Mammary epithelial cell (primary cell): ENCODE measurements at regions of chr2 and their contacts with region 1.

Region 1: GRCh38 chr2:151051574-151052220 is 210.0 kb downstream of the RBM43 start:
- DNase-seq: peak; percentile 60
- H3K4me3 ChIP-seq: no peak overlapping the region
- H3K27ac ChIP-seq: no peak overlapping the region
- H3K4me1 ChIP-seq: peaks cover 29% of the 10 kb centered on the region
- H3K27me3 ChIP-seq: no peaks in the 10 kb centered on the region
- CTCF ChIP-seq: peak; percentile 85 to 86

Region 2: DNA sequence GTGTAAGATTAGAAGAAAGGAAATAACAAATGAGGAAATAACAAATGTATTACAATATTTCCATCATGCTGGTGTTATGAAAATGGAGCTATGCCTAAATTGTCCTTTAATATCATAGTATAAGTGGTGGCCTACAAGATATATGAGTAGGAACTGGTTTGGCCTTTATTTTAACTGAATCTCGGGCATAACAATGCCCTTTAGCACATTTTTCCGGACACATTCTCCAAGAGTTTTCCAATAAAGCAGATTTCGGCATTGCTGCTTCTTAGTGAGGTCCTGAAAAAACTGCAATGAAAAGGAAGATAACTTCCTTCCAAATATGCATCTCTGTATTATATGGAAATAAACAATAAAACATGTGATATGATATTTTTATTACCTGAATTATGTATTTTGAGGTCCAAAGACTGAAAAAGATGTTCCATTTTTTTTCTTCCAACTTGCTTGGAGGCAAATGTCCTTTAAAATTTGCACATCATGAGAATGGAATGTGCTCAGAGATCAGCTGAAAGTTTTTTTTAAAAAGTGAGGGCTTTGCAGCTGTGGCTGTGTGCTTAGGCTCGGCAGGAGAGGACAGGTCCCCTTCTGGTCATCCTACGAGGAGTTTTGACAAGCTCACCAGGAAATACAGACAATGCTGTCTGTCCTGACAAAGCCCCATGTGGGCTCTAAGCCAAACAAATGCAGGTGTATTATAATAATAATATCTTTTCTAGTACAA is 431.9 kb before region 1 on chr2:
- CTCF ChIA-PET with region 1: no interaction called
- dilution Hi-C with region 1: no loop called
- in situ Hi-C with region 1: no loop called
- intact Hi-C with region 1: loop called (anchors 1 kb)
- DNase-seq: peak; percentile 70
- H3K4me3 ChIP-seq: no peak overlapping the region
- H3K27ac ChIP-seq: peak overlapping the region; percentile 83
- H3K4me1 ChIP-seq: peaks cover 45% of the 10 kb centered on the region
- H3K27me3 ChIP-seq: no peaks in the 10 kb centered on the region
- CTCF ChIP-seq: no peak

Region 3: DNA sequence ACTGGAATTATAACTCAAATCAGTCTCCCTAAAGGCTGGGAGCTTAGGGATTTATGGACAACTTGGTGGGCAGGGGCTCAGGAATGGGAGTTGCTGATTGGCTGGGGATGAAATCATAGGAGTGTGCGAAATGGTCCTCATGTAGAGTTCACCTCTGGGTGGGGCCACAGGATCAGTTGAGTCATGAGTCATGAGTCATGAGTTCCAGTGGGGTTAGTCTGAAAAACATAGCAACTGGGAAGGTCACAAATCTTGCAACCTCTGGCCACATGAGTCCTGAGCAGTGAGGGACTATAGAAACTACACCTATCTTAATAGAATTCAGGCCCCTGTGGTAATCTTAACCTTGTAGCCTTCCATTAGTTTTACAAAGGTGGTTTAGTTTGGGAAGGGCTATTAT is 173.3 kb before region 1 on chr2:
- CTCF ChIA-PET with region 1: no interaction called
- dilution Hi-C with region 1: no loop called
- in situ Hi-C with region 1: no loop called
- intact Hi-C with region 1: loop called (anchors 1 kb)
- DNase-seq: peak; percentile 78
- H3K4me3 ChIP-seq: no peak overlapping the region
- H3K27ac ChIP-seq: no peak overlapping the region
- H3K4me1 ChIP-seq: no peaks in the 10 kb centered on the region
- H3K27me3 ChIP-seq: no peaks in the 10 kb centered on the region
- CTCF ChIP-seq: no peak

Region 4: GRCh38 chr2:150911766-150912280 is 139.9 kb before region 1 on chr2:
- CTCF ChIA-PET with region 1: no interaction called
- dilution Hi-C with region 1: no loop called
- in situ Hi-C with region 1: no loop called
- intact Hi-C with region 1: loop called (anchors 1 kb)
- DNase-seq: peak; percentile 70
- H3K4me3 ChIP-seq: no peak overlapping the region
- H3K27ac ChIP-seq: peak overlapping the region; percentile 30
- H3K4me1 ChIP-seq: peaks cover 19% of the 10 kb centered on the region
- H3K27me3 ChIP-seq: no peaks in the 10 kb centered on the region
- CTCF ChIP-seq: peak in 1 of 2 donors; percentile 36